Activated naive CD4-positive, alpha-beta T cell treated with anti-CD3 and anti-CD28 coated beads for 36 hours (primary cell): ENCODE measurements at regions of chr14 and their contacts with region 1.

Region 1: GRCh38 chr14:22852940-22853767 is 16.8 kb downstream of the MMP14 start:
- DNase-seq: peak; percentile 95
- H3K4me3 Mint-ChIP-seq: peak overlapping the region; percentile 72
- H3K27ac Mint-ChIP-seq: peak overlapping the region; percentile 84
- H3K4me1 Mint-ChIP-seq: peaks cover 24% of the 10 kb centered on the region
- H3K27me3 Mint-ChIP-seq: no peaks in the 10 kb centered on the region

Region 2: DNA sequence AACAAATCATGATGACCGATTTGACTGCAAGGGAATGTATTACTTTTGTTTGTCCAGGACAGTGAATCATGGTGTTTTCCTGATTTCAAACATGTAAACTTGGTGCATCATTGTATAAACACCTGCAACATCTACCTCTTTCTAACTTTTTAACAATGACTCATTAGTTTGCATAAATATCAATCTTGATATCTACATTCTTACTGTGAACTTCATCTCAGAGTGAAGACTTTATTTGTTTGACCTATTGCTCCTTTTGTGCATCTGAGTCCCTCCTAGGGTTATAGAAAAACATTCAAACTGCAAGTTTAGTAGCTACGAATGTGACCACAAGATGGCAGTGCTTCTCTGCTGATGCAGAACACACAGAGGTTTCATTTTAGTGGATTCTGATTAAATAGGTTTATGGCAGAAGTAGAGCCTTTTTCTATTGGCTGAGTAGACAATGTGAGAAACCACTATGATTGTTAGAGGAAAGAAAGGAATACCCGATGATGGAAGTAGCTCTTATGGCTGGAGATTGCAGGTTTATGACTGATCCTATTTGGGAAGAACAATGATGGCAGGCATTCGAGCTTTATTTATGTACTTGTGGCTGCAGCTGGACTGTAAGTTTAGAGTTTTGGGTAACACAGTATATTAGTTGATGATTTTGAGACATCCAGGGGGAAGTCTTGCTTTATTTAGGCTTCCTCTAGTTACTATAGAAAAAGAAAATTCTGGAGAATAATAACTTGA is 935.3 kb before region 1 on chr14:
- CTCF ChIA-PET with region 1: interaction called, 4 read pairs
- intact Hi-C with region 1: loop called (anchors 10 kb)
- DNase-seq: peak; percentile 82
- H3K4me3 Mint-ChIP-seq: peak overlapping the region; percentile 69
- H3K27ac Mint-ChIP-seq: peak overlapping the region; percentile 89
- H3K4me1 Mint-ChIP-seq: peaks cover 58% of the 10 kb centered on the region
- H3K27me3 Mint-ChIP-seq: no peaks in the 10 kb centered on the region

Region 3: GRCh38 chr14:22221508-22221907 is 631.6 kb before region 1 on chr14:
- CTCF ChIA-PET with region 1: no interaction called
- intact Hi-C with region 1: loop called (anchors 10 kb)
- DNase-seq: no peak
- H3K4me3 Mint-ChIP-seq: peak overlapping the region; percentile 69
- H3K27ac Mint-ChIP-seq: peak overlapping the region; percentile 72
- H3K4me1 Mint-ChIP-seq: peaks cover 7% of the 10 kb centered on the region
- H3K27me3 Mint-ChIP-seq: no peaks in the 10 kb centered on the region

Region 4: GRCh38 chr14:22699801-22700564 is 153.2 kb before region 1 on chr14:
- CTCF ChIA-PET with region 1: no interaction called
- intact Hi-C with region 1: no loop called
- DNase-seq: no peak
- H3K4me3 Mint-ChIP-seq: no peak overlapping the region
- H3K27ac Mint-ChIP-seq: no peak overlapping the region
- H3K4me1 Mint-ChIP-seq: no peaks in the 10 kb centered on the region
- H3K27me3 Mint-ChIP-seq: peaks cover 15% of the 10 kb centered on the region

Region 5: DNA sequence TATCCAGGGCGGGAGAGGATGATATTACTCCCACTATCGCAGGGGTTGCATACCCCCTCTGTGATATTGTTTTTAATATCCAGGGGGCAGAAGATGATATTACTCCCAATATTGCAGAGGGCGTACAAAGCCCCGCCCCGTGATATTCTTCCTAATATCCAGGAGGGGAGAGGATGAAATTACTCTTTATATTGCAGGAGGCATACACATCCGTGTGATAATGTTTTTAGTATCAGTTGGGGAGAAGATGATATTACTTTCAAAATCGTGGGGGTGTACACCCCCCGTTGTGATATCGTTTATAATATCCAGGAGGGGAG is 139.6 kb before region 1 on chr14:
- CTCF ChIA-PET with region 1: interaction called, 4 read pairs
- intact Hi-C with region 1: loop called (anchors 2 kb)
- DNase-seq: no peak
- H3K4me3 Mint-ChIP-seq: peak overlapping the region; percentile 84
- H3K27ac Mint-ChIP-seq: peak overlapping the region; percentile 63
- H3K4me1 Mint-ChIP-seq: peaks cover 13% of the 10 kb centered on the region
- H3K27me3 Mint-ChIP-seq: peaks cover 11% of the 10 kb centered on the region

Region 6: DNA sequence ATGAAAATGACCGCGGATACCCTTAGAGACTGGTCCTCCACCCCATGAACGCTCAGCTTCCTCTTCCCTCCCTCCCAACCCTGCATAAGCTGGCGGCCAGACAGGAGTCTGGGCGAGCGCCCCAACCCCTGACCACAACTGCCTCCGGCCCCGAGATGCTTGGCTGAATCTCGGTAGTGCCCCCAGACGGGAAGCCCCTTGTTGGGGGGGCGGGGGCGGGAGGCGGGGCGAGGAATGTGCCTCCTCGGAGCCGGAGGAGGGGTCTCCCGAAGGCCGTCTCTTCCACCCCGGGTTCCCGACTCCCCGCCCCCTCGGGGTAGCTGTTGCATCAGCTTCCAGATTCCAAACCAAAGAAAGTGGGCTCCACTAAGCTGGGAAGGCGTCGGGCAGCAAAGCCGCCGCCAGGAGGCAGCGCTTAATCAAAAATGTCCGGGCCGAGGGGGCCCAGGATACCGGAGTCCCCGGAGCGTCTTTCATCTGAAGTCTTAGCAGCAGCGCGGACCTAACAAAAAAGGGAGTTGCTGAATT is 30.5 kb before region 1 on chr14:
- CTCF ChIA-PET with region 1: interaction called, 212 read pairs
- intact Hi-C with region 1: loop called (anchors 1 kb)
- DNase-seq: peak; percentile 75
- H3K4me3 Mint-ChIP-seq: peak overlapping the region; percentile 61
- H3K27ac Mint-ChIP-seq: no peak overlapping the region
- H3K4me1 Mint-ChIP-seq: peaks cover 31% of the 10 kb centered on the region
- H3K27me3 Mint-ChIP-seq: peaks cover 1% of the 10 kb centered on the region

Region 7: GRCh38 chr14:22865424-22866405 is 12.6 kb after region 1 on chr14:
- CTCF ChIA-PET with region 1: interaction called, 47 read pairs
- intact Hi-C with region 1: loop called (anchors 1 kb)
- DNase-seq: peak; percentile 56
- H3K4me3 Mint-ChIP-seq: no peak overlapping the region
- H3K27ac Mint-ChIP-seq: peak overlapping the region; percentile 18
- H3K4me1 Mint-ChIP-seq: peaks cover 19% of the 10 kb centered on the region
- H3K27me3 Mint-ChIP-seq: no peaks in the 10 kb centered on the region